Activated B cell treated with CpG ODN at 0.5 μM for 24 hours (primary cell): ENCODE measurements at regions of chr10 and their contacts with region 1.

Region 1: GRCh38 chr10:97400665-97401454 is at the start of gene RRP12:
- DNase-seq: peak; percentile 66
- ATAC-seq: peak; percentile 89
- H3K4me3 Mint-ChIP-seq: peak within 1 kb of the TSS; percentile 91
- H3K27ac Mint-ChIP-seq: peak within 1 kb of the TSS; percentile 92
- H3K4me1 Mint-ChIP-seq: peaks cover 18% of the 10 kb centered on the region
- H3K27me3 Mint-ChIP-seq: no peaks in the 10 kb centered on the region
- CTCF ChIP-seq: no peak
- total RNA-seq, gene RRP12: 61.8 and 62.6 TPM in 2 replicates

Region 2: DNA sequence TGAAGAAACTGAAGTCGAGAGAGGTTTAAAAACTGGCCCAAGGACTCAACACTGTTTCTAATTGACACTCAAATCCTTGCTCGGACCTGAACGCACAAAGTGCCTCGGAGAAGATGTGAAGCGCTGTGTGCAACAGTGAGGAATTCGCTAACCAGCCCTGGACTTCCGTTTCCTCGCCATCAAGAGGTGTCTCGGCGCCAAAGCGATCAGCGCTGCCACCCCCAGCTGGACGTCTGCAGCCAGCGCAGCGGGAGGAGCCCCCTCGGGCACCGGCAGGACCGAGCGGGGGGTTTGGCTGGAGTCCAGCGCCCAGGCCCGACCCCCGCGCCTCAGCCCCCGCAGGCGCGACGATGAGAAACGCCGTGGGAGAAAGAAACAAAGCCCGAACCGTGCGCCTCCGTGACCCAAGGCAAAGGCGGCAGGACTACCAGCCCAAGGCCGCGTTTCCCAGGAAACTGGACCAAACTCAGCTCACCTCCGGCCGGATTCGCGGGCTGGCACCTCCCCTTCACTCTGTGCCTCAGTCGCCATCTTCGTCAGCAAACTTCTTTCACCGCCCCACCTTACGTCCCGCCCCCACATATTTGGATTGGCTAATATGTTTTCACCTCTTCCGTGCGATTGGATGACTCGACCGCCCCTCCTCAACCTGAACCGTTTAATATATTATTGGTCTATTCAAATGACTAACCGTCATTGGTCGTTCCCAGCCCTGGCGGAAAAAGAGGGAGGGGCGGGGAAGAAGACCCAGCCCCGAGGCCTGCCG is 108.6 kb before region 1 on chr10 and contains the start of gene ARHGAP19:
- CTCF ChIA-PET with region 1: no interaction called
- POLR2A ChIA-PET with region 1: interaction called, 3 read pairs
- intact Hi-C with region 1: loop called (anchors 1 kb)
- DNase-seq: peak; percentile 73
- ATAC-seq: peak; percentile 98
- H3K4me3 Mint-ChIP-seq: peak within 1 kb of the TSS; percentile 92
- H3K27ac Mint-ChIP-seq: peak within 1 kb of the TSS; percentile 85
- H3K4me1 Mint-ChIP-seq: peaks cover 19% of the 10 kb centered on the region
- H3K27me3 Mint-ChIP-seq: peaks cover 1% of the 10 kb centered on the region
- CTCF ChIP-seq: no peak
- total RNA-seq, gene ARHGAP19: 14.7 and 17.8 TPM in 2 replicates

Region 3: DNA sequence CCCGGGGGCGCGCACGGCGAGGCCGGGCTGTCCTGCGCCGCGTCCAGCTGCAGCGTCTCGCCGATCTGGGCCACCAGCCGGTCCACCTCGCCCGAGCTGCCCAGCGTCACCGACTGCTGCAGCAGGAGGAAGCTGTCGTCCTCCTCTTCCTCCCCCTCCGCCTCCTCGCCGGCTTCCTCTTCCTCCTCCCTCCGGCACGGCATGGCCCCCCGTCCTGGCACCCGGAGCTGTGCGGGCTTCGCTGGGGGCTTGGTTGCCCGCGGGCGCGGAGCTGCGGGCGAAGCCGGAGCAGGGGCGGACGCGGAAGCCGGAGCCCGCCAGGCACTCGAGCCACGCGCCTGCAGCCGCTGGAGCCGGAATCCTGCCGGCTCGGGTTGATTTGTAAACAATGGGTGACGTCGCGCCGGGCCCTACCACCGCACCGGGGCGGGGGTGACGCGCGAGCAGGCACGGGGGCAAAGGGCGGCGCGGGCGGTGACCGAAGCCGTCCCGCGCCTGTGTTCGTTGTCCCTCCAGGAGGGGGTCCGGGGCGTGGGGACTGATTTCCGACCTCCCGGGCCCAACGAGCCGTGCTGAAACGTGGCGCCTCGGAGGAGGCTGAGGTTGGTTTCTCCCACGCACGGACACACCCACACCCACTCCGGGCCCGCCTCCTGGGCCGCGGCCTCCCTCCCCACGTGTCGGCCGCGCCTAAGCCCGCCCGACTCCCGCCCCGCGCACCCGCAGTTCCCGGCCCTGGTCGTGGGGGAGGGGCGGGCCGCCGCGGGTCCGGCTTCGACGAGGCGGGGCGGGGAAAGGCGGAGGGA is 66.3 kb before region 1 on chr10 and contains the start of gene FRAT2:
- CTCF ChIA-PET with region 1: no interaction called
- POLR2A ChIA-PET with region 1: no interaction called
- intact Hi-C with region 1: loop called (anchors 1 kb)
- DNase-seq: peak; percentile 90
- ATAC-seq: peak; percentile 91
- H3K4me3 Mint-ChIP-seq: peak within 1 kb of the TSS; percentile 87
- H3K27ac Mint-ChIP-seq: peak within 1 kb of the TSS; percentile 92
- H3K4me1 Mint-ChIP-seq: peaks cover 46% of the 10 kb centered on the region
- H3K27me3 Mint-ChIP-seq: no peaks in the 10 kb centered on the region
- CTCF ChIP-seq: no peak
- total RNA-seq, gene FRAT2: 9.7 and 10.9 TPM in 2 replicates

Region 4: GRCh38 chr10:97425964-97426775 is 25.3 kb after region 1 on chr10 and contains the start of gene PGAM1:
- CTCF ChIA-PET with region 1: no interaction called
- POLR2A ChIA-PET with region 1: interaction called, 6 read pairs
- intact Hi-C with region 1: loop called (anchors 1 kb)
- DNase-seq: peak; percentile 97
- ATAC-seq: peak; percentile 88
- H3K4me3 Mint-ChIP-seq: peak within 1 kb of the TSS; percentile 92
- H3K27ac Mint-ChIP-seq: peak within 1 kb of the TSS; percentile 94
- H3K4me1 Mint-ChIP-seq: peaks cover 43% of the 10 kb centered on the region
- H3K27me3 Mint-ChIP-seq: no peaks in the 10 kb centered on the region
- CTCF ChIP-seq: no peak
- total RNA-seq, gene PGAM1: 162 and 166 TPM in 2 replicates

Region 5: DNA sequence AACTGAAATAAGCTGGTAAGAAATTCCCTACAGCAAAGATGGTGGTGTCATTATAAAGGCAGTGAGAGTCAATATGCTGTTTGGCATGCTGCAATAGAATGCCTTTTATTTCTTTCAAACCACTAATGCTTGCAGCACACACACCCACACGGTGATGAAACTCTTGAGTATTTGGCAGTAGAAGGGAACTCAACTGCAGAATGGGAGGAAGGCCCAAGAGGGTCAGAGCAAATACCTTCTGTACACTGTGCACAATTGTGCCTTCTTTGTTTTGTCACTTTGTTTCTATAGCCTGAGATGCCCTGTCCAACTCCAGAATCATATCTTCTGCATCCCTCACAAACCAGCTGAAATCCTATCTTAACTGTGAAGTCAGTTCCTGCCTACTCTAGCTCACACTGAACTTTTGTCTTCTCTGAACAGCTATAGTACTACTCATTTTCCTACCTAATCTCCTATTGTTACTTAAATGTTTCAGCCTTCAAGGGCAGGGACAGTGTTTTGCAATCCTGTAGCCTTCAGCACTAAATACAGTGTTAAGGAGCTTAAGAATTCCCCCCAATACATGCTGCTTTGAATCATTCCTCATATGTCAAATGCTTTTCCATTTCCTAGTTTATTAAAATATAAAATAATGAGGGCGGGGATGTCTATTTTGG is 75.2 kb after region 1 on chr10:
- CTCF ChIA-PET with region 1: no interaction called
- POLR2A ChIA-PET with region 1: interaction called, 10 read pairs
- intact Hi-C with region 1: no loop called
- DNase-seq: no peak
- ATAC-seq: no peak
- H3K4me3 Mint-ChIP-seq: no peak overlapping the region
- H3K27ac Mint-ChIP-seq: no peak overlapping the region
- H3K4me1 Mint-ChIP-seq: no peaks in the 10 kb centered on the region
- H3K27me3 Mint-ChIP-seq: no peaks in the 10 kb centered on the region
- CTCF ChIP-seq: no peak

Region 6: DNA sequence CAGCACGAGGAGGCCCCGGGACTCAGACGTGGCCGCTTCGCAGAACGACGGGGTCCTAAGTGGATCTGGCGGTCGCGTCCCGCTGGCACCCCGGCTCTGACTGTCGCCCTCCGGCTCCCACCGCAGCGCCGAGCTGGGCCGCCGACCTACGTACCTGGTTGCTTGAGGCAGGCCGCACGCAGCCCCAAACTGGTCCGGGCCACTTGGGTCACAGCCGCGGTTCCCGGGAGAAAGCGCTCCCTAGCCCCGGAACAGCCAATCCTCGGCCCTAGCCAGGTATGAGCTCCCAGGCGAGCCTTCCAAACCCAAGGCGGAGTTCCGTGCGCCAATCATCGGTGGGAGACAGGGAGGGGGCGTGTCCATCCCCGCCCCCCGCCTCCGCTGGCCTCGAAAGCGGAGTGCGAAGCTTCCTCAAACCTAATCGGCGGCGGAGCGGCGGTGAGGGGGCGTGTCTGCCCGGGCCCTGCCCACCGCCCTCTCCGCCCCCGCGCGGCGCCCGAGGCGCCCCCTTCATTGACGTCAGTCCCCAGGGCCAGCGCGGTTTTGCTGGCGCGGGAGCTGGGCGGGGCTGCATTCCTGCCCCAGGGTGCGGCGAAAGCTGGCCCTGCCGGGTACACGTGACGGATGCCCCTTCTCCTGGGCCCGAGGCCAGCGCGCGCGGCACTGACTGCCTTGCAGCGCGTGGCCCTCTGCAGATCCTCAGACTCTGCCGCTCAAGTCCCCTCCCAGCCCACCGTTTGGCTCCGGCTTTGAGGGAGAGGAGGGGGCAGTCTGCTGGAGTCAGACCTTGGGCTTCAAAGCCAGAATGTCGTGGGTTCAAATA is 286.3 kb after region 1 on chr10 and contains the start of gene AVPI1:
- CTCF ChIA-PET with region 1: no interaction called
- POLR2A ChIA-PET with region 1: no interaction called
- intact Hi-C with region 1: loop called (anchors 1 kb)
- DNase-seq: peak; percentile 97
- ATAC-seq: peak; percentile 96
- H3K4me3 Mint-ChIP-seq: peak within 1 kb of the TSS; percentile 87
- H3K27ac Mint-ChIP-seq: peak within 1 kb of the TSS; percentile 68
- H3K4me1 Mint-ChIP-seq: peaks cover 9% of the 10 kb centered on the region
- H3K27me3 Mint-ChIP-seq: no peaks in the 10 kb centered on the region
- CTCF ChIP-seq: no peak
- total RNA-seq, gene AVPI1: 0.51 and 1.2 TPM in 2 replicates